ENCODE measurements at regions of chr13 and their contacts with region 1.

Region 1: GRCh38 chr13:50081679-50082425 is 66.6 kb downstream of the KCNRG start:
- DNase-seq: peak; percentile 94
- H3K4me3 ChIP-seq: peak overlapping the region; percentile 93 to 95
- H3K27ac ChIP-seq: peak overlapping the region; percentile 85 to 90
- H3K4me1 ChIP-seq: peaks cover 5 to 7% of the 10 kb centered on the region in 2 experiments; a peak in 3 of 4 replicates
- H3K27me3 ChIP-seq: no peaks in the 10 kb centered on the region
- CTCF ChIP-seq: peak; percentile 46
- EP300 ChIP-seq: no peak
- RAD21 ChIP-seq: no peak

Region 2: GRCh38 chr13:49976314-49977258 is 105.3 kb before region 1 on chr13:
- CTCF ChIA-PET with region 1: interaction called, 28 read pairs
- POLR2A ChIA-PET with region 1: no interaction called
- DNase-seq: peak; percentile 66
- H3K4me3 ChIP-seq: no peak overlapping the region; a peak in 1 of 4 replicates
- H3K27ac ChIP-seq: peak overlapping the region in 1 of 2 experiments; percentile 12; a peak in 1 of 4 replicates
- H3K4me1 ChIP-seq: peaks cover 4 to 5% of the 10 kb centered on the region in 2 experiments; a peak in 2 of 4 replicates
- H3K27me3 ChIP-seq: no peaks in the 10 kb centered on the region
- CTCF ChIP-seq: peak; percentile 97
- EP300 ChIP-seq: no peak
- RAD21 ChIP-seq: peak; percentile 94

Region 3: DNA sequence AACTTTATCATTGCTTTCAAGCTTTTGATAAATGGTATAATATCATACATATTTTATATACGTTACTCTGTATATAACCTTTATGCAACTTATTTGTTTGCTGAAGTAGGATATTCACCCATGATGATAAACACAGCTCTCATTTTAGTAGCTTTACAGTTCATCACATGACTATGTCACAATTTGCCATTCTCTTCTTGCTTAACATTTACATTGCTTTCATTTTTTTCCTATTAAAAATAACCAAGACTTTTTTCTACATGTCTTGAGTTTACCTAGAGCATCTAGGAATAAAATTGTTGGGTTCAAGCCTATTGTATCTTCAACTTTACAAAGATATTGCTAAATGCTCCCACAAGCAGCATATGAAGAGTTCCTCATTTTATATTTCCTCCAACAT is 12.6 kb before region 1 on chr13:
- CTCF ChIA-PET with region 1: interaction called, 33 read pairs
- POLR2A ChIA-PET with region 1: no interaction called
- DNase-seq: no peak
- H3K4me3 ChIP-seq: no peak overlapping the region
- H3K27ac ChIP-seq: peak overlapping the region; percentile 9 to 47; a peak in 3 of 4 replicates
- H3K4me1 ChIP-seq: peaks cover 18 to 40% of the 10 kb centered on the region in 2 experiments; a peak in 3 of 4 replicates
- H3K27me3 ChIP-seq: no peaks in the 10 kb centered on the region
- CTCF ChIP-seq: no peak
- EP300 ChIP-seq: no peak
- RAD21 ChIP-seq: no peak

Region 4: DNA sequence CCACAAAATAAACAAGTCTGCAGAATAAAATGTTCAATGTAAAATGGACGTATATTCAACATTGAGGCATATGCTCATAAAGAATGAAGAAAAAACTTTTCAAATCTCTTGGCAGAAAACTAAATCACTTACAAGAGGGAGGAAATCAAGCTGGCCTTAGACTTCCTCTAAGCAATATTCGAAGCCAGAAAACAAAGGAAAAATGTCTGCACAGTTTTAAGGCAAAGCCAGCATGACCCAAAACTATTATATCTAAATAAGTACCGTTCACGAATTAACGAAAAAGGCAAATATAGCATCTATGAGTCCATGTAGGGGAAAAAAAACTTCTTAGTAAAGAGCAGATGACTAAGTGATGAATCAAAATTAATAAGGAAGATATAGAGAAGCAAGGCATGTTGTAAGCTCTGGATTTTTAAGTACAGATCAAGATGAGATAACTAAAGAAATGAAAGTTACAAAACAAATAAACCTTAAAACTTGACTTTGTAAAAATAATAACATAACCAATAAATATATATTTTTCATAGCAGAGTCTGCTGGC is 34.6 kb after region 1 on chr13:
- CTCF ChIA-PET with region 1: interaction called, 15 read pairs
- POLR2A ChIA-PET with region 1: no interaction called
- DNase-seq: no peak
- H3K4me3 ChIP-seq: no peak overlapping the region
- H3K27ac ChIP-seq: peak overlapping the region; percentile 50 to 62; a peak in 3 of 4 replicates
- H3K4me1 ChIP-seq: peaks cover 0 to 8% of the 10 kb centered on the region in 2 experiments; a peak in 2 of 4 replicates
- H3K27me3 ChIP-seq: no peaks in the 10 kb centered on the region
- CTCF ChIP-seq: no peak
- EP300 ChIP-seq: peak in 1 of 2 experiments; percentile 24; a peak in 1 of 4 replicates
- RAD21 ChIP-seq: no peak

Region 5: DNA sequence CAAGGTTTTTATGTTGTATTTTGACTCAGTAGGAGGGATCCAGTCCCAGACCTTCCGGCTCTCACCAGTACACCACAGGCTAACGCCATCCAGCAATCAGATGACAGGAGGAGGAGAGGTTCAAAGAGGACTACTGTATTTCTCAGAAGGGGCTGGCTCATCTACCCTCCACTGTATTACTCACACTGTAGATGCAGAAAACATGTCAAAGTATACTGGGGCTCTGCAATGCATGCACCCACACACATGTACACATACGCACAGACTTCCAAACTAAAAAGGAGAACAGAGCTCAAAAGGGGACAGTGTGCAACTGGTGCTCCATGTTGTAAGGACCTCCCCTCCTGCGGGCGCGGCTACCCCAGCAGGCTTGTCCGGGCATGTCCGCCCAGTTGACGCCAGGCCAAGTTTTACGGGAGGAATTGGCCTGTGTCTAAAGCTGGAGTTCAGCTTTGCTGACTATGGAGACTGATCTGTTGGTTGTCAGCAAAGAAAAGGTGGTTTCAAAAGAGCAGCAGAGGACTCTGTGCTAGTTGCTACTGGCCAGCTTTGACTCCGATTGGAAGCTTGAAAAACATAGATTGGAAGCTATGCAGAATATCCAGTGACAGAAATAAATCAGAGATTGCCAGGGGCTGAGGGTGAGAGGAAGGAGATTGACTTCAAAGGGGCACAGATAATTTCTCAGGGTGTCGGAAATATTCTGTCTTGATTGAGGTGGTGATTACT is 447.5 kb after region 1 on chr13:
- CTCF ChIA-PET with region 1: interaction called, 11 read pairs
- POLR2A ChIA-PET with region 1: interaction called, 3 read pairs
- DNase-seq: peak; percentile 37
- H3K4me3 ChIP-seq: no peak overlapping the region
- H3K27ac ChIP-seq: peak overlapping the region; percentile 19 to 60; a peak in 3 of 4 replicates
- H3K4me1 ChIP-seq: peaks cover 10 to 20% of the 10 kb centered on the region in 2 experiments; a peak in 3 of 4 replicates
- H3K27me3 ChIP-seq: no peaks in the 10 kb centered on the region
- CTCF ChIP-seq: no peak
- EP300 ChIP-seq: no peak
- RAD21 ChIP-seq: no peak